Transverse colon (tissue), 4 donors: ENCODE measurements at regions of chr7 and their contacts with region 1.

Region 1: GRCh38 chr7:43764039-43764761 is 5.7 kb downstream of the BLVRA start:
- DNase-seq: peak; percentile 52
- H3K4me3 ChIP-seq: peak overlapping the region in 1 of 4 donors; percentile 6
- H3K27ac ChIP-seq: peak overlapping the region; percentile 40 to 62 (median 44)
- H3K4me1 ChIP-seq: peaks cover 4 to 27% (median 12%) of the 10 kb centered on the region in 4 donors
- H3K27me3 ChIP-seq: no peaks in the 10 kb centered on the region
- CTCF ChIP-seq: no peak
- EP300 ChIP-seq: no peak
- POLR2A ChIP-seq: no peak

Region 2: GRCh38 chr7:43815373-43815772 is 51.2 kb after region 1 on chr7:
- in situ Hi-C with region 1: no loop called
- intact Hi-C with region 1: loop called (anchors 10 kb)
- DNase-seq: no peak
- H3K4me3 ChIP-seq: no peak overlapping the region
- H3K27ac ChIP-seq: no peak overlapping the region
- H3K4me1 ChIP-seq: no peaks in the 10 kb centered on the region
- H3K27me3 ChIP-seq: peaks cover 4% of the 10 kb centered on the region
- CTCF ChIP-seq: no peak
- EP300 ChIP-seq: no peak
- POLR2A ChIP-seq: no peak

Region 3: GRCh38 chr7:44244282-44244681 is 480.1 kb after region 1 on chr7:
- in situ Hi-C with region 1: no loop called
- intact Hi-C with region 1: no loop called
- DNase-seq: no peak
- H3K4me3 ChIP-seq: no peak overlapping the region
- H3K27ac ChIP-seq: no peak overlapping the region
- H3K4me1 ChIP-seq: peaks cover 0 to 6% (median 2%) of the 10 kb centered on the region in 4 donors
- H3K27me3 ChIP-seq: no peaks in the 10 kb centered on the region
- CTCF ChIP-seq: peak in 2 of 5 experiments; percentile 14 to 16
- EP300 ChIP-seq: no peak
- POLR2A ChIP-seq: no peak

Region 4: GRCh38 chr7:44259547-44260457 is 495.6 kb after region 1 on chr7:
- in situ Hi-C with region 1: no loop called
- intact Hi-C with region 1: no loop called
- DNase-seq: peak; percentile 15
- H3K4me3 ChIP-seq: no peak overlapping the region
- H3K27ac ChIP-seq: peak overlapping the region in 3 of 4 donors; percentile 10 to 46 (median 37)
- H3K4me1 ChIP-seq: peaks cover 6 to 16% (median 14%) of the 10 kb centered on the region in 4 donors
- H3K27me3 ChIP-seq: peaks cover 18% of the 10 kb centered on the region
- CTCF ChIP-seq: no peak
- EP300 ChIP-seq: no peak
- POLR2A ChIP-seq: no peak